IMR-90 (cell line): ENCODE measurements at regions of chr18 and their contacts with region 1.

Region 1: GRCh38 chr18:12308386-12309100 is 502 bp downstream of the TUBB6 start:
- DNase-seq: peak; percentile 88
- ATAC-seq: peak; percentile 50
- H3K4me3 ChIP-seq: peak overlapping the region; percentile 96
- H3K27ac ChIP-seq: peak overlapping the region; percentile 97
- H3K4me1 ChIP-seq: peaks cover 16% of the 10 kb centered on the region
- H3K27me3 ChIP-seq: no peaks in the 10 kb centered on the region
- CTCF ChIP-seq: no peak
- POLR2A ChIP-seq: no peak; the same call in 1 of the 2 replicates
- RAD21 ChIP-seq: no peak; the same call in 1 of the 2 replicates

Region 2: DNA sequence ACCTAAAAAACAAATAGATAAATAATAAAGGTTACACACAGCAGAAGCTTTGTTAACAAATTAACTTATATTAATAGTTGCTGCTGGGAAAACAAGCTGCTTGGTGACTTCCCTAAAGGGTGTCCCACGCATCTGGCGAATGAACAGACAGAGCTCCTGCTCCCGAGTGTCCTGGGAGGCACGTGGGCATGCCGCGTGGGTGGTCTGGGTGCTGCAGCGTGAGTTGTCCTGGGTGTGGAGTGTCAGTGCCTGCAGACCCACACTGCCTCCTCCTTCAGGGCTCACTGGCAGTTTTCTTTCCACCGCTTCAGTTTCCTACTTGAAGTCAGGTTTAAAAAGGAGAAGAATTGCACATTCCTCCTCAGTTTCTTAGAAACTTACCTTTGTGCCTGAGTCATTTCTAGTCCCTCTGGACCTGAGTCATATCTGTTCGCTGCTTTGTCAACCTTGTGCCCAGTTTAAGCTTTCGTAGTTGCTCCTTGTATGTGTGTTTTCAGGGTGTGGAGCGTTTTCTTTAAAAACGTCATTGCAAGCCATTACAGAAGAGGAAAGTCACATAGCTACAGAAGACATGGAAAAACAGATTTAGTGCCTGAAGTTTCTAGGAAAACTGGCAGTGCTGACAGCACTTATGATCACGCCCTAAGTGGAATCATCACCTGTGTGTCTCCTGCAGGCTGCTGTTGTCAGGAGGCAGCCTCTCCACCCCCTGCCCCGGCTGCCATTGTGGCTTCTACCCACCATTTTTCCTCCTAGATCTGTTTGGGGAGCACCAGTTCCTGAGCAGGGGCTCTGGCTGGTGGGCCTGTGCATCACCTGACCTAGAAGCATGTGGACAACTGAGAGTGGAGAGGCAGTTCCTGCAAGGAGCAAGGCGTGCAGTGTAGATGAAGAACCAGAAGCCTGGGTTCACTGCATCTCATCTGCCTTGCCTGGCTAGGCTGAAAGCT is 302.7 kb before region 1 on chr18:
- CTCF ChIA-PET with region 1: no interaction called
- POLR2A ChIA-PET with region 1: no interaction called
- dilution Hi-C with region 1: no loop called
- in situ Hi-C with region 1: no loop called
- intact Hi-C with region 1: no loop called
- DNase-seq: no peak
- ATAC-seq: no peak
- H3K4me3 ChIP-seq: no peak overlapping the region
- H3K27ac ChIP-seq: no peak overlapping the region
- H3K4me1 ChIP-seq: no peaks in the 10 kb centered on the region
- H3K27me3 ChIP-seq: no peaks in the 10 kb centered on the region
- CTCF ChIP-seq: no peak
- POLR2A ChIP-seq: no peak
- RAD21 ChIP-seq: no peak

Region 3: DNA sequence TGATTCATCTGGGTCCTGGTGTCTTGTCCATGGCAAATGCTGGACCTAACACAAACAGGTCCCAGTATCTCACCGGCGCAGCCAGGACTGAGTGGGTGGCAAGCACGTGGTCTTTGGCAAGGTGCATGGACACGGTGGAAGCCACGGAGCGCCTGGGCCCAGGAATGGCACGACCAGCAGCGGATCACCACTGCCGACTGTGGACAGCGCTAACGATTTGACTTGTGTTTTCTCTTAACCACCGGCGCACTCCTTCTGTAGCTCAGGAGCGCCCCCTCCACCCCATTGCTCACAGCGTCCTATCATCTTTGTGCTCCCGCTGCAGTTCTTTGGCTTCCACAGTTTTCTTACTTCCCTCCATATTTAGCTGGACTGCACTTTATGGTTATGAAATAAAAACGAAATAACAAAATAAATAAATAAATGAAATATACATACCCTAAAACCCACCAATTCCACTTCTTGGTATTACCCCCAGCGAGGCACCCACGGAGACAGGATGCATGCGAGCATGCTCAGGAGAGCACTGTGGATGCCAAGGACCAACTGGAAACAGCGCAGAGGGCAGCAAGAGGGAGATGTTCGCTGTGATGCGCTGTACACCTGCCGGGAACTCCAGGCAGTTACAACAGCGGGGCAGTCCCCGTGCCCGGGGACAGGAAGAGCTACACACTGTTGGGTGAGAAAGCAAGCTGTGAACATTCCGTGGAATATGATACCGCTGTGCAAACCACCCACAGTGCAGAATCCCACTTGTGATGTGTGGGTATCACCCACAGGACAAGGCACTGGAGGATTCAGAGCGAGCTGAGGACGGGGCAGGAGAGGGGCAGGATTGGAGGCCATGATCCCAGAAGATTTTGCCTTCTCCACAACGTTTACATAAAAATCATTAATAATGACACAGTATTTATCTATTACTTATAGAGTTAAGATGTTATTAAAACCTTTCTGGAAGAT is 61.4 kb before region 1 on chr18:
- CTCF ChIA-PET with region 1: no interaction called
- POLR2A ChIA-PET with region 1: no interaction called
- dilution Hi-C with region 1: no loop called
- in situ Hi-C with region 1: no loop called
- intact Hi-C with region 1: no loop called
- DNase-seq: no peak
- ATAC-seq: peak; percentile 32; the same call in 1 of the 2 replicates
- H3K4me3 ChIP-seq: no peak overlapping the region
- H3K27ac ChIP-seq: no peak overlapping the region
- H3K4me1 ChIP-seq: no peaks in the 10 kb centered on the region
- H3K27me3 ChIP-seq: peaks cover 62% of the 10 kb centered on the region
- CTCF ChIP-seq: peak; percentile 36
- POLR2A ChIP-seq: no peak
- RAD21 ChIP-seq: peak; percentile 37

Region 4: GRCh38 chr18:12271376-12272235 is 36.9 kb before region 1 on chr18:
- CTCF ChIA-PET with region 1: interaction called, 9 read pairs
- POLR2A ChIA-PET with region 1: interaction called, 5 read pairs
- dilution Hi-C with region 1: no loop called
- in situ Hi-C with region 1: loop called (anchors 5 kb)
- intact Hi-C with region 1: loop called (anchors 1 kb)
- DNase-seq: peak; percentile 74
- ATAC-seq: peak; percentile 99
- H3K4me3 ChIP-seq: peak overlapping the region; percentile 53
- H3K27ac ChIP-seq: peak overlapping the region; percentile 23; the same call in 1 of the 2 replicates
- H3K4me1 ChIP-seq: no peaks in the 10 kb centered on the region
- H3K27me3 ChIP-seq: peaks cover 6% of the 10 kb centered on the region
- CTCF ChIP-seq: peak; percentile 58
- POLR2A ChIP-seq: no peak; the same call in 1 of the 2 replicates
- RAD21 ChIP-seq: peak; percentile 47

Region 5: GRCh38 chr18:12278741-12279682 is 29.5 kb before region 1 on chr18:
- CTCF ChIA-PET with region 1: no interaction called
- POLR2A ChIA-PET with region 1: interaction called, 8 read pairs
- dilution Hi-C with region 1: no loop called
- in situ Hi-C with region 1: loop called (anchors 5 kb)
- intact Hi-C with region 1: loop called (anchors 1 kb)
- DNase-seq: peak; percentile 98
- ATAC-seq: peak; percentile 94
- H3K4me3 ChIP-seq: peak overlapping the region; percentile 45
- H3K27ac ChIP-seq: peak overlapping the region; percentile 97
- H3K4me1 ChIP-seq: peaks cover 34% of the 10 kb centered on the region
- H3K27me3 ChIP-seq: no peaks in the 10 kb centered on the region
- CTCF ChIP-seq: 0 out of 2 replicates have a peak, but pooled peaks have one; percentile 2
- POLR2A ChIP-seq: peak; percentile 96
- RAD21 ChIP-seq: peak; percentile 11; the same call in 1 of the 2 replicates

Region 6: GRCh38 chr18:12287684-12288402 is 20.7 kb before region 1 on chr18:
- CTCF ChIA-PET with region 1: no interaction called
- POLR2A ChIA-PET with region 1: interaction called, 4 read pairs
- dilution Hi-C with region 1: no loop called
- in situ Hi-C with region 1: no loop called
- intact Hi-C with region 1: loop called (anchors 2 kb)
- DNase-seq: peak; percentile 95
- ATAC-seq: peak; percentile 95
- H3K4me3 ChIP-seq: peak overlapping the region; percentile 40
- H3K27ac ChIP-seq: peak overlapping the region; percentile 90
- H3K4me1 ChIP-seq: peaks cover 13% of the 10 kb centered on the region
- H3K27me3 ChIP-seq: no peaks in the 10 kb centered on the region
- CTCF ChIP-seq: 0 out of 2 replicates have a peak, but pooled peaks have one; percentile 11
- POLR2A ChIP-seq: peak; percentile 78; the same call in 1 of the 2 replicates
- RAD21 ChIP-seq: no peak